Adrenal gland (tissue), 19 donors: ENCODE measurements at regions of chr4 and their contacts with region 1.

Region 1: GRCh38 chr4:8468746-8469535 is 28.4 kb downstream of the TRMT44 start:
- DNase-seq: peak; percentile 50 to 82 (median 67)
- H3K4me3 ChIP-seq: no peak overlapping the region
- H3K27ac ChIP-seq: no peak overlapping the region
- H3K4me1 ChIP-seq: peaks cover 0 to 5% of the 10 kb centered on the region in 2 donors
- H3K27me3 ChIP-seq: no peaks in the 10 kb centered on the region
- CTCF ChIP-seq: peak; percentile 78 to 95 (median 86)
- POLR2A ChIP-seq: no peak

Region 2: DNA sequence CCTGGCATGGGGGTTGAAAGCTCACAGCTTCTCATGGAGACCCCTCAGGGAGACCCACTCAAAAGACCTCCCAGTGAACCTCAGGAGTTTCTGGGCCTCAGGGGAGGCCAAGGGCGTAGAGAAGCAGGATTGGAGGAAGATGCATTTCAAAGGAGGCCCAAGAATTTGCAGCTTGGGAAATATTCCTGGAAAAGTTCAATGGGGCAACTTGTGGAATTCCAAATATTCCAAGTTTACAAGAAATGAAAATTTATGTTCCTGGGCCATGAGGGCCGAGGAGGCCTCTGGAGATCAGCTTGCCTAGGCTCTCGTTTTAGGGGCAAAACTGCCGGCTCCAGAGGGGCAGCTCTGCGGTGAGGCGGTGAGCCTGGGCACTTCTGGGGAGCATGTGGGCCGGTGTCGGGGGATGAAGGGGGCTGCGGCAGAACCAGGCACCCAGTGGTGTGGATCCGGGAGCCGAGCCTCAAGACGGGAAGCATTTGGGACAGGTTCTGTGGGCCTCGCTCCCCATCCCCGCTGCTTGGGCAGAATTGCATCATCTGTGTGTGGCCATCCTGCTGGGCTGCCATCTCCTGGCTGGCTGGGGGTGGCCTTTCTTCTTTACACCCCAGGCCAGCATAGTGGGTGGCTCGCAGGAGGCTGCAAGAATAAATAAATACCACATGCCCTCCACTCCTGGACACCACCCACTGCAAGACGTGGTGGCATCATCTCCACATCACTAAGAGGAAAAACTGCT is 56.6 kb after region 1 on chr4:
- intact Hi-C with region 1: no loop called
- DNase-seq: no peak
- H3K4me3 ChIP-seq: no peak overlapping the region
- H3K27ac ChIP-seq: peak overlapping the region in 1 of 5 donors; percentile 82
- H3K4me1 ChIP-seq: no peaks in the 10 kb centered on the region
- H3K27me3 ChIP-seq: no peaks in the 10 kb centered on the region
- CTCF ChIP-seq: no peak
- POLR2A ChIP-seq: no peak

Region 3: DNA sequence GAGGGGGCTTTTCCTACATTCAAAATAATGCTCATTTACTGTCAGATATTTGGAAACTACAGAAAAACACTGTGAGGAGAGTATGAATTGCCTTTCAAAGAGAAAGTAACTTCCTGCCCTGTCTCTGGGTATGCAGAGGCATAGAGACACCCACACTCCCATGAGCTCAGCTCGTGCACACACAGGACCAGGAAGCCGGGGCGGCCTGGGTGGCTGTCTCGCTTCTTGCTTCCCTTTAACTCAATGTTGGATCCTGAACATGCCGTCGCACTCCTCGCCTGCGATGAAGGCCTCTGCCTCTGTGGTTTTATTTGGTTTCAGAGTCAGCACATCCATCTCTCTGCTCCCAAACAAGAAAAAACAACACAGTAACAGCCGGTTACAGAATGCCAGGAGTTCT is 71.1 kb after region 1 on chr4:
- intact Hi-C with region 1: loop called (anchors 5 kb)
- DNase-seq: no peak
- H3K4me3 ChIP-seq: no peak overlapping the region
- H3K27ac ChIP-seq: no peak overlapping the region
- H3K4me1 ChIP-seq: peaks cover 5 to 8% of the 10 kb centered on the region in 2 donors
- H3K27me3 ChIP-seq: no peaks in the 10 kb centered on the region
- CTCF ChIP-seq: no peak
- POLR2A ChIP-seq: no peak

Region 4: DNA sequence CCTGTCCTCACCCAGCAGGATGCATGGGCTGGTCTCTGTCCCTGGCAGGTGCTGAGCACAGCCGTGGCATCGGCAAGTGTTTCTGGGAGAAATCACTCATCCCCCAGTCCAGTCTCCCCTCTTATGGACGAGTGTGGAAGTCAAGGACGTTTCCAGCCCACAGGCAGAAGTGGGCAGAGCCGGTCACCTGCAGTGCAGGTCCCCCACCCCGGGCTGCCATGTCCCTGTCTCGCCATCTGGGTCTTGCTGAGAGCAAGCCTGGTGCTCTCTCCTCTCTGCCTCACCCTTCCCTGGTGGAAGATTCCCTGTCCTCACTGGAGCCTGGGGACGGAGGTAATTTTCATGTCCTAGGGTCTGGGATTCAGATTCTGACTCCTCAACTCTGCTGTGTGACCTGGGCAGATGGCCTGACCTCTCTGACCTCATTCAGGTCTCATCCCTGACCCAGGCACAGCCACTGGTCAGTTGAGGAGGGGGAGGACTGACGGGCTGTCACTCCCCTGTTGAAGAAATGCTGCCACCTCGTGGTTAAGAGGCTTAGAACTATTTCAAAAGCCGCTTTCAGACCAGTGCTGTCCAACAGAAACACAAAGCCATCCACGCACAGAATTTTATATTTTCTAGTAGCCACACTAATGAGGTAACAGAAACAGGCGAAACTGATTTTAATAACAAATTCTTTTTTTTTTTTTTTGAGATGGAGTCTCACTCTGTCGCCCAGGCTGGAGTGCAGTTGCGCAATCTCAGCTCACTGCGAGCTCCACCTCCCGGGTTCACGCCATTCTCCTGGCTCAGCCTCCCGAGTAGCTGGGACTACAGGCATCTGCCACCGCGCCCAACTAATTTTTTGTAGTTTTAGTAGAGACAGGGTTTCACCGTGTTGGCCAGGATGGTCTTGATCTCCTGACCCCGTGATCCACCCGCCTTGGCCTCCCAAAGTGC is 125.4 kb after region 1 on chr4:
- intact Hi-C with region 1: loop called (anchors 2 kb)
- DNase-seq: peak; percentile 62 to 76 (median 70)
- H3K4me3 ChIP-seq: no peak overlapping the region
- H3K27ac ChIP-seq: no peak overlapping the region
- H3K4me1 ChIP-seq: no peaks in the 10 kb centered on the region
- H3K27me3 ChIP-seq: peaks cover 15% of the 10 kb centered on the region
- CTCF ChIP-seq: peak; percentile 55 to 72 (median 60)
- POLR2A ChIP-seq: no peak